ENCODE measurements at regions of chr2 and their contacts with region 1.

Region 1: DNA sequence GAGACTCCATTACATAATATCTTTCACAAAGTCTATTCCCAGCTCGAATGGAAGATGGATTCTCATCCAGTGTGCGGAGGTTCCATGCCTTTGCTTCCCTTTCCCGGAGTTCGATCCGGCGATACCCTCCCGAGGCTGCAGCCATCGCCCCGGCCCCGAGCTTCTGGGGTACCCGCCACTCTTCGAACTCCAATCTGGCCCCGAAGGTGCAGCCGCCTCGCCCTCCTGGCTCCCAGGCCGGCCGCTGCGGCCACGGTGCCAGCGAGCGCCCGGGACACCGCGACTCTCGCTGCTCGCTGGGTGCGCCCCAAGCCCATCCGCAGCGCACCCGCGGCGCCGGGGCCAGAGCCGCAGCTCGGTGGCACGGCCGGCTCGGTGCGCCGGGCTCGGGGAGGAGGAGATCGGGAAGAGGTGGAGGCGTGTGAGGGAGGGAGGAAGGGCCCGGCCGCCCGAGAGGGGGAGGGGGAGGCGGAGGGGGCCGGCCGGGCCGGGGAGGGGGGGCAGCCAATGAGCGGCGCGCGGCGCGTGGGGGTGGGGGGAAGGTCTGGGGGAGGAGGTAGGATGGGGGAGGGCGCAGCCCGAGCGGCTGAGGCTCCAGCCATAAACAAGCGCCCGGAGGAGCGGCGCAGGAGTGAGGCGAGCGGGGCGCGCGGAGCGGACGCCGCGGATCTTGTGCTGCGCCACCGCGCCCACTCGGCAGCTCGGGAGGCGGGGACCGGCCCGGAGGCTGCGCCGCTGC is at the start of gene CRIM1:
- DNase-seq: peak; percentile 84
- H3K4me3 Mint-ChIP-seq: peak within 1 kb of the TSS; percentile 96
- H3K27ac Mint-ChIP-seq: peak within 1 kb of the TSS; percentile 61
- H3K4me1 Mint-ChIP-seq: peaks cover 31% of the 10 kb centered on the region
- H3K27me3 Mint-ChIP-seq: peaks cover 60% of the 10 kb centered on the region
- total RNA-seq, gene CRIM1: 16.8 and 19.0 TPM in 2 replicates

Region 2: DNA sequence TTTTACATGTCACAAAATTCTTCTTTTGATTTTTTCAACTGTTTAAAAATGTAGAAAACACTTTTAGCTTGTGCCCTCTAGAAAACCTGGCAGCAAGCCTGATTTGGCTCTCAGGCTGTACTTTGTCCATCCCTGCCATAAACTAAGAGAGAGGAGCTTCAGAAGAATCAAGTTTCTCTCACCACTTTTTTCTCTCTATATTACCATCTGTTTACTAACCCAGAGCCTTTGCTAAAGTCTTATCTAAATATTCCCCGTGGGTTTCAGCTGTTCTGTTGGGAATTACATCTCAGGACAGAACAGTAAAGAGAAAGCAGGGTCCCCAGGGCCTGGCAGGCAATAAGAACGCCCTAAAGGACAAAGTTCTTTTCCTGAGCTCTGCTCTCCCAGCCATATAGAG is 408.8 kb before region 1 on chr2:
- intact Hi-C with region 1: no loop called
- DNase-seq: no peak
- H3K4me3 Mint-ChIP-seq: no peak overlapping the region
- H3K27ac Mint-ChIP-seq: no peak overlapping the region
- H3K4me1 Mint-ChIP-seq: no peaks in the 10 kb centered on the region
- H3K27me3 Mint-ChIP-seq: peaks cover 11% of the 10 kb centered on the region

Region 3: DNA sequence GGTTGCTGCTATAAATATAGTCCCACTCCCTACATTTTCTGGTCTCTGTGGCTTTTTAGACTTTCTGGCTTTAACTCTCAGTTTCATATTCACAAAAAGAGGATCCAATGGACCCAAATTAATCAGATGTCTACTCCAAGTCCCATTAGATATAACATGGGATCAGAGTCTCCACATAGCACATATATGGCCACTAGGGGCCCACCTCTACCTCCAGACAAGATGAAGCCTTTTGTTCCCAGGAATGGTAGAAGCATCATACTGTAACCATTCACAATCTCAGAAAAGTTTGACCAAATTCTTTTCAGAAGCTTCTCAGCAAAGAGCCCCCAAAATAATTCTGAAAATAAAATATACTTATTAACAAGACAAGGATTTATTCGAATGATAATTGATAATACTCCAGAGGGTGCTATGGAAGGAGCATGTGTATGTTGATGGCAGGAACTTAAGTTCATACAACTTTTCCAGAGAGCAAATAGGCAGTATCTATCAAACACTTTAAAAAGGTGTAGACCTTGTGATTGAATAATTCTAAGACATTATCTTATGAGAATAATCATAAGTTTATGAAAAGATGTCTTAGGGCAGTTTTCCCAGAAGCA is 382.1 kb before region 1 on chr2:
- intact Hi-C with region 1: loop called (anchors 5 kb)
- DNase-seq: no peak
- H3K4me3 Mint-ChIP-seq: no peak overlapping the region
- H3K27ac Mint-ChIP-seq: no peak overlapping the region
- H3K4me1 Mint-ChIP-seq: peaks cover 3% of the 10 kb centered on the region
- H3K27me3 Mint-ChIP-seq: peaks cover 16% of the 10 kb centered on the region

Region 4: DNA sequence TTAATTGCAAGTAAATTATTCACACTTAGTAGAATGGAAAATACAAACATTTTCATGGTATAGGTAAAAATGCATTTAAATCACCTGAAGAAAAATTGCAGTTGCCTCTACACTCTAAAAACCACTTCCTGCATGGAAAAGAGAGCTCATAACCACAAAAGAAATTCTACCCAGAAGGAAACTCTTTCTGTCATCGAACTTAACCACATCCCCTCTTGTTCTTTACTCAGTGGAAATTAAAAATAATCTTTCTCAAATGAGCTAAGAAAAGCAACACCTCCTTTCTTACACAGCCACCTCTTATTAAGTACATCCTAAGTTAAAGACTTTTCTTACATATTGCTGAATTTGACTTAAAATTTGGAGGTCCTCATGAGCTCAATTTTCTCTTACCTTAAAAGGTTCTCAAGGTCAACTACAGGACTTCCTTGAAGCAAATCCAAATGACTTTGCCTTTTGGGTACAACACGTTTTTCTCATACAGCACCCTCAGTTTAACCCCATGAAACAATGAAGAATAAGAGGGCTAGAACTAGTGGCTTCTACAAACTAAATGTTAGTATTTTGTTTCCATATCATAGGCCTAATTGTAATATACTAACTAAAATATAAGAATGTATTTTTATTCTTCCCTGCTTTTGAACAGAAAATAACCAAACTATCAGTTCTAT is 108.9 kb before region 1 on chr2:
- intact Hi-C with region 1: loop called (anchors 2 kb)
- DNase-seq: peak; percentile 82
- H3K4me3 Mint-ChIP-seq: peak overlapping the region; percentile 60
- H3K27ac Mint-ChIP-seq: peak overlapping the region; percentile 90
- H3K4me1 Mint-ChIP-seq: peaks cover 63% of the 10 kb centered on the region
- H3K27me3 Mint-ChIP-seq: peaks cover 6% of the 10 kb centered on the region

Region 5: DNA sequence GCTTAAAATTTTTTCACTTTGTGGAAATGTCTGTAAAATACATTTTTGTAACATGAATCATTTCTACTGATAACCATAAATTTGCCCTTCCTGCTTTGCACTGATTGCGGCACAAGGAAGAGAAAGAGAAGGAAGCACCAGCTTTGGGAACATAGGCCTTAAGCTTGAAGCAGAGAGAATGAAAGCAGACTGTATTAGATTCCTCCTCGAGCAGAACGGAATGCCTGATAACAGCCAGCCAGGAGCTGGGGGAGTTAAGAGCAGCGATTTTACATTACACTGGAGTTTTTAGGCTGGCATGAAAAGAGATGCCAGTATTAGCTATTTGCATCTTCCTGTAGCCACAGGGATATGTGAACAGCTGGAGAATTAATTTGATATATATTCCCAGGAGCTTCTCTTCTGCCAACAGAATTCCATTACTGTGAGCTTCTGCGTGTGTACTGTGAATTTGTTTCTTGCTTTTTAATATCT is 33.8 kb after region 1 on chr2:
- intact Hi-C with region 1: no loop called
- DNase-seq: no peak
- H3K4me3 Mint-ChIP-seq: no peak overlapping the region
- H3K27ac Mint-ChIP-seq: no peak overlapping the region
- H3K4me1 Mint-ChIP-seq: peaks cover 7% of the 10 kb centered on the region
- H3K27me3 Mint-ChIP-seq: peaks cover 23% of the 10 kb centered on the region

Region 6: DNA sequence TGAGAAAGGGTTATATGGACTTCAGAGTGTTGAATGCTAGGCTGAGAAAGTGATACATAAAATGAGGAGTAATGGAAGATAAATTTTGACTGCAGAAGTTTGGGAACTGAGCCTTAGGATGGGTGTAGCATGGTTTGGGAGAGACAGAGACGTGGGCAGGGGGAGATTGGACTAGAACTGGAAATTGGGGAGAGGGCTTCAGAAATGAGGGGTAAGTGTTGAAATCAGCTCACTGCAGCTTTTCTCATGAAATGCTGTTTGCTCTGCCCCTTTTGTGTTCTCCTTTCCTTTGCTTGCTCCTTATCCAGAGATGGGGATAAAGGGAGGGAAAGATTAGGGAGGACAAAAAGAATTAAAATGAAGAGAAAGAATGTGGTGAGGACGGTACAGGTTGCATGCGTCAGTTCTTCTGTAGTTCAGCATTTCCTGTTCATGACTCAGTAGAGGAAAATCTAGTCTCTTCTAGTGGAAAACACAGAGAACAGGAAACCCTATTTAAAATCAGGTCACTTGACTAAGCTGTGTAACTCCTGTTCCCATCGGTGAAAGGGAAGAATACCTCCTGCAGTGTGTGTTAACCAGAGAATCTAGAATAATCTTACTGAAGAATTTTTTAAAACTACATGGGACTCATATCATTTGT is 105.8 kb after region 1 on chr2:
- intact Hi-C with region 1: loop called (anchors 1 kb)
- DNase-seq: peak; percentile 56
- H3K4me3 Mint-ChIP-seq: no peak overlapping the region
- H3K27ac Mint-ChIP-seq: no peak overlapping the region
- H3K4me1 Mint-ChIP-seq: peaks cover 2% of the 10 kb centered on the region
- H3K27me3 Mint-ChIP-seq: no peaks in the 10 kb centered on the region

Region 7: DNA sequence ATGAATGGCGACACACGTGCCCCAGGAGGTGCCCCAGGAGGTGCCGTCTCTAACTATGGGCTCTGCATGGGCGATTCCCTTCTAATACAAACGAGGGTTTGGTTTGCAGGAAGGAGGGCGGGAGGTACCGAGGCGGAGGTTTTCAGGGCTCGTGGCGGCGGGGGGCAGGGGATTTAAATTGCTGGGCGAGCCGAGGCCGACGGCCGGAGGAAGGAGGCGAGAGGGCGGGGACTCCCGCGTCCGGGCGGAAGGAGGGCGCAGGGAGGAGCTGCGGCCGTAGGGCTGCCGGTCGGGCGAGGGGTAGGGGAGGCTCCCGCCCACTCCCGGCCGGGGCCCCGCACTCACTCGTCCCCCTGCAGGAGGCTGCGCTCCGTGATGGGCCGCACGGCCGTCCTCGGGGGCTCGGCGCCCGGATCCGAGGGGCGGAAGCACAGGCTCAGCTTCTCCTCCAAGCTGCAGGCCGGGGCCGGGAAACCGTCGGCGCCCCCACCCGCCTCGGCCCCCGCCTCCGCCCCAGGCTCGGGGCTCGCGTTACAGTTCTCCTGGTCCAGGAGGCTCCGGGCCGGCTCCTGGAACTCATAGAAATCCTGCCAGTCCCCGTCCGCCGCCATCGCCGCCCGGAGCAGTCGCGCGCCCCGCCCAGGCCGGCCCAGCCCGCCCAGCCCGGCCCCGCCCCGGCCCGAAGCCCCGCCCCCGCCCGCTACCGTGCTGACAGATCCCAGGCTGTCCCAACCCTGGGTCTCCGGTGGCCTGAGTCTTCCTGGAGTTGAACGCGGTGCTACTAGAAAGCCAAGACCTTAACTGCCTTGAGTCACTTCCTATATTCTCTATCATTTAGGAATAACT is 242.4 kb after region 1 on chr2 and contains the start of gene FEZ2:
- intact Hi-C with region 1: loop called (anchors 1 kb)
- DNase-seq: peak; percentile 94
- H3K4me3 Mint-ChIP-seq: peak within 1 kb of the TSS; percentile 97
- H3K27ac Mint-ChIP-seq: peak within 1 kb of the TSS; percentile 94
- H3K4me1 Mint-ChIP-seq: peaks cover 16% of the 10 kb centered on the region
- H3K27me3 Mint-ChIP-seq: no peaks in the 10 kb centered on the region
- total RNA-seq, gene FEZ2: 13.5 and 17.5 TPM in 2 replicates

Region 8: GRCh38 chr2:36770542-36771287 is 415.4 kb after region 1 on chr2:
- intact Hi-C with region 1: loop called (anchors 5 kb)
- DNase-seq: peak; percentile 77
- H3K4me3 Mint-ChIP-seq: no peak overlapping the region
- H3K27ac Mint-ChIP-seq: no peak overlapping the region
- H3K4me1 Mint-ChIP-seq: peaks cover 2% of the 10 kb centered on the region
- H3K27me3 Mint-ChIP-seq: peaks cover 15% of the 10 kb centered on the region

Measured in activated CD4-positive, alpha-beta T cell treated with anti-CD3 and anti-CD28 coated beads, Interleukin-2, amount 10 ng/mL, durations not matched to agents 24 days and 14 days (primary cell).